ENCODE measurements at regions of chr7 and their contacts with region 1.

Region 1: DNA sequence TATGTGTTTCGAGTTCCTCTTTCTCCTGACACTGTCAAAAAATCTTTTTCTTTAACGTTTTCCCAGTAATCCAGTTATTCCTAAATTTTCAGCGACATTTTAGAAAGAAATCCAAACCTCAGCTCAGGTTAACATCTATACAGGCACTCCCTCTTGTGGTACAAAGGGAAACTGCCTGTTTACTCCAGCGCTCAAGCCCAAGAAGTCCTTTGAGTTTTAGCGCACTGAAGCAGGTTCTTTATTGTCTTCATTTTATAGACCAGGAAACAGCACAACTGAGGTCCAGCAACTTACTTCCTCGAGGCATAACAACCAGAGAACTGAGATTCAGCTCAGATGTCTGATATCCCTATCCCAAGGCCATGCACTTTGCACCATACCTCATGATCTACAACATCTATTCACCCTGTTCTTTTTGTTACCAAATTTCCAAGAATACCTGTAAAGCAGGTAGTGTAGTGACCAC is 287.2 kb upstream of the MKLN1 start:
- DNase-seq: peak; percentile 63
- ATAC-seq: peak; percentile 68
- H3K4me3 Mint-ChIP-seq: peak overlapping the region; percentile 40
- H3K27ac Mint-ChIP-seq: peak overlapping the region; percentile 82
- H3K4me1 Mint-ChIP-seq: peaks cover 59% of the 10 kb centered on the region
- H3K27me3 Mint-ChIP-seq: no peaks in the 10 kb centered on the region

Region 2: DNA sequence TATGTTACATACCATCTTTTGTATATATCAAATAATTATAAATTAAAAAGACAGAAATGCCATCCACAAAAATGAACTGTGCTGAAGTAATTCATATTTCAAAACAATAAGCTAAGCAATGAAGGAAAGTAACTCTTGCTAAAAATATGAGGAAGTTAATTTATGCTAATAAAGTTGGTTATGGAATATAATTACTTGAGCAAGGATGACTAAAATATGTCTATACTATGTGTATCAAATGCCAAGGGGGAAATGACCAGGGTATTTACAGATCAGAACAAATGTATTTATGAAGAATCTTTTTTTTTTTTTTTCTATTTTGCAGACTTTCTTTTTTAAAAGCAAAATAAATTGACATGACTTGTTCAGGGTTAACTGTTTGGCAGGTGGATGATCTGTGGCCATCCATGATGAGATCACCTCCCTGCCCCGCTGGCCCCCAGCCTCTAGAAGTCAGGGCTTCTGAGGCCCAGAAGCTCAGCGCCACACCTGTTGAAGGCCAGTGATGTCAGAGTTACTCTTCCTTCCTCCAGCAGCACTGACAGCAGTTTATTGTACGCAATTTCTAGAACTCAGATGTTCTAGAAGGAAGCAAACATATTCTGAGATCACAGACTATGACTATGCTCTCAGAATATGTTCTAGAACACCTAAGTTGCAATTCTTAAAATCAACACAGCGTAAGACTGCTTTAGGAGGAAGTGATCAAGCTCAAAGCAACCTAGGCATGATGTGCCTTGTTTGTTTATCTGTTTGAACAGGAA is 110.4 kb before region 1 on chr7:
- CTCF ChIA-PET with region 1: interaction called, 11 read pairs
- POLR2A ChIA-PET with region 1: no interaction called
- intact Hi-C with region 1: no loop called
- DNase-seq: no peak
- ATAC-seq: peak; percentile 30
- H3K4me3 Mint-ChIP-seq: peak overlapping the region; percentile 9
- H3K27ac Mint-ChIP-seq: peak overlapping the region; percentile 91
- H3K4me1 Mint-ChIP-seq: peaks cover 92% of the 10 kb centered on the region
- H3K27me3 Mint-ChIP-seq: no peaks in the 10 kb centered on the region

Region 3: GRCh38 chr7:130954918-130955564 is 85.5 kb before region 1 on chr7:
- CTCF ChIA-PET with region 1: interaction called, 46 read pairs
- POLR2A ChIA-PET with region 1: interaction called, 15 read pairs
- intact Hi-C with region 1: loop called in 1 of 2 experiments (anchors 2 kb)
- DNase-seq: no peak
- ATAC-seq: peak; percentile 5
- H3K4me3 Mint-ChIP-seq: no peak overlapping the region
- H3K27ac Mint-ChIP-seq: peak overlapping the region; percentile 99
- H3K4me1 Mint-ChIP-seq: peaks cover 42% of the 10 kb centered on the region
- H3K27me3 Mint-ChIP-seq: no peaks in the 10 kb centered on the region

Region 4: GRCh38 chr7:130996841-130997231 is 43.7 kb before region 1 on chr7:
- CTCF ChIA-PET with region 1: interaction called, 11 read pairs
- POLR2A ChIA-PET with region 1: no interaction called
- intact Hi-C with region 1: no loop called
- DNase-seq: peak; percentile 67
- ATAC-seq: peak; percentile 66
- H3K4me3 Mint-ChIP-seq: peak overlapping the region; percentile 64
- H3K27ac Mint-ChIP-seq: peak overlapping the region; percentile 92
- H3K4me1 Mint-ChIP-seq: peaks cover 86% of the 10 kb centered on the region
- H3K27me3 Mint-ChIP-seq: no peaks in the 10 kb centered on the region

Region 5: GRCh38 chr7:131007394-131008330 is 32.8 kb before region 1 on chr7:
- CTCF ChIA-PET with region 1: interaction called, 11 read pairs
- POLR2A ChIA-PET with region 1: no interaction called
- intact Hi-C with region 1: loop called in 1 of 2 experiments (anchors 2 kb)
- DNase-seq: peak; percentile 80
- ATAC-seq: peak; percentile 27
- H3K4me3 Mint-ChIP-seq: peak overlapping the region; percentile 68
- H3K27ac Mint-ChIP-seq: peak overlapping the region; percentile 96
- H3K4me1 Mint-ChIP-seq: peaks cover 90% of the 10 kb centered on the region
- H3K27me3 Mint-ChIP-seq: no peaks in the 10 kb centered on the region

Region 6: GRCh38 chr7:131027287-131027773 is 13.2 kb before region 1 on chr7:
- CTCF ChIA-PET with region 1: interaction called, 10 read pairs
- POLR2A ChIA-PET with region 1: no interaction called
- intact Hi-C with region 1: no loop called
- DNase-seq: peak; percentile 70
- ATAC-seq: peak; percentile 27
- H3K4me3 Mint-ChIP-seq: peak overlapping the region; percentile 25
- H3K27ac Mint-ChIP-seq: peak overlapping the region; percentile 85
- H3K4me1 Mint-ChIP-seq: peaks cover 85% of the 10 kb centered on the region
- H3K27me3 Mint-ChIP-seq: no peaks in the 10 kb centered on the region

Region 7: DNA sequence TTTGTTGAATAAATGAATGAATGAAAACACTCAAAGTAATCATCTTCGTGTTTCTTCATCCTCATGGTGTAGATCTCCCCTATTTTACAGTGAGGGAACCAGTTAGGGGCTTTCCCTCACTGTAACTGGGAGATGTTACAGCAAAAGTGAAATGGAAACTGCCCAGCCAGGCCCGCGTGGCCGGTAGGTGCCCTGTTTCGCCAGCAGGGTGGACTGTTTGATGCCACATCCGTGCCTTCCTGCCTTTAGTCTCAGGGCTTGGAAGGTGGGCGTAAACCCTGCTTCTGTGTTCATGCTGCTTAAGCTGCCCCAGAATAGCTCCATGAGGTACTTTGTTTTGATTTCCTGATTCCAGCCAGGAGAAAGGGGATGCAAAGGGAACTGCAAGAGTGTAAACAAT is 1267.0 kb after region 1 on chr7:
- CTCF ChIA-PET with region 1: no interaction called
- POLR2A ChIA-PET with region 1: no interaction called
- intact Hi-C with region 1: no loop called
- DNase-seq: no peak
- ATAC-seq: no peak
- H3K4me3 Mint-ChIP-seq: no peak overlapping the region
- H3K27ac Mint-ChIP-seq: no peak overlapping the region
- H3K4me1 Mint-ChIP-seq: no peaks in the 10 kb centered on the region
- H3K27me3 Mint-ChIP-seq: peaks cover 13% of the 10 kb centered on the region